Right ventricle myocardium inferior (tissue), 1 donor: ENCODE measurements at regions of chr11 and their contacts with region 1.

Region 1: GRCh38 chr11:72793425-72794367 is at the start of gene STARD10:
- DNase-seq: peak; percentile 98
- ATAC-seq: peak; percentile 96
- total RNA-seq, gene STARD10: 114 TPM

Region 2: GRCh38 chr11:72722050-72722748 is 71.5 kb before region 1 on chr11:
- intact Hi-C with region 1: loop called (anchors 1 kb)
- DNase-seq: peak; percentile 94
- ATAC-seq: peak; percentile 81